Prostate gland (tissue), 2 donors: ENCODE measurements at regions of chr19 and their contacts with region 1.

Region 1: GRCh38 chr19:29610563-29611271 is 4.6 kb downstream of the POP4 start:
- DNase-seq: peak; percentile 79
- H3K4me3 ChIP-seq: no peak overlapping the region
- H3K27ac ChIP-seq: no peak overlapping the region
- H3K4me1 ChIP-seq: no peaks in the 10 kb centered on the region
- H3K27me3 ChIP-seq: no peaks in the 10 kb centered on the region
- CTCF ChIP-seq: peak; percentile 61 to 89 (median 84)
- POLR2A ChIP-seq: no peak

Region 2: DNA sequence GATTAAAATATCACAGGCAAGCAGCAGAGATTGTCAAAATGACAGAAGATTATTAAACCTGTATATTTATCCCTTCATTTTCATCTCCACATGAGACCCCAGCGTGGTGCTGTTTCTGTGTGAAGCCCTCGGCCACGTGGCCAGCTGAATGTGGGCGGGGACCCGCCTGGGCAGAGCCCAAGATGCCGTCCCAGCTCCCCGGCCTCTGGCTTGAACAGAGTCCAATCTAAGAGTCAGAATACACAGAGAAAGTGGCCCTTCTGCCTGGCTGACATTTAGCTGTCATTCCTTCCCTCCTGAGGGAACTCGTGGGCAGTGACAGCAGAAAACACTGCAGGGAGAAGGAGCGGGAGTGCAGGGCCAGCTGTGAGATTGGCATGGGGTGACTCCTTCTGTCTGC is 362.8 kb before region 1 on chr19:
- intact Hi-C with region 1: no loop called
- DNase-seq: no peak
- H3K4me3 ChIP-seq: no peak overlapping the region
- H3K27ac ChIP-seq: no peak overlapping the region
- H3K4me1 ChIP-seq: no peaks in the 10 kb centered on the region
- H3K27me3 ChIP-seq: no peaks in the 10 kb centered on the region
- CTCF ChIP-seq: no peak
- POLR2A ChIP-seq: no peak

Region 3: DNA sequence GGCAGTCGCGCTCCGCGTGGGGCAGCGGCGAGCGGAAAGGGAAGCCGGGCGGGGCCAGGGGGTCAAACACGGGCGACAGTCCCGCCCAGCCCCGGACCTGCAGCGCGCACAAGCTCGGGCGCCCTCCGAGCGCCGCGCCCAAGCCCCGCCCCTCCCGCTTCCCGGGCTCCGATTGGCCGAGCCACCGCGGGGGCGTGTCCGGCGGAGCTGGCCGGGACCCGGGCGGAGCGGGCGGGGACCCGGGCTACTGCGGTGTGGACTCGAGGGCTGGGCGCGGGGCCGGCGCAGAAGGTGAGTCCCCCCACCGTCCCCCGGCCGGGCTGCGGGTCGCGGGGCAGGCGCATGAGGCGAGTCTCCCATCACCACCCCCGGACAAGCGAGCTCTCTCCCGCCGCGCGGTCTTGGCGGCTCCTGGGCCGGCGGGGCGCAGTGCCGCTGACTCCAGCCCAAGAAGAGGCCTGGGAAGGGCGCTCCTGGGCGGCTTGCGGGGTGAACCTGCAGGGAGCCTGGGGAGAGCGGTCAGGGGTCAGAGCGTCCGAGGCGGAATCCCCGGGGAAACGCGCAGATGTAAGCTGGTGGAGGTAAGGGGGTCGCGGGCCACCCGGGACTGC is 54.6 kb after region 1 on chr19 and contains the start of gene PLEKHF1:
- intact Hi-C with region 1: loop called (anchors 5 kb)
- DNase-seq: peak; percentile 89
- H3K4me3 ChIP-seq: peak within 1 kb of the TSS; percentile 76 to 88
- H3K27ac ChIP-seq: peak within 1 kb of the TSS; percentile 89 to 91
- H3K4me1 ChIP-seq: peaks cover 24% of the 10 kb centered on the region
- H3K27me3 ChIP-seq: no peaks in the 10 kb centered on the region
- CTCF ChIP-seq: peak in 1 of 4 experiments; percentile 9
- POLR2A ChIP-seq: peak; percentile 89
- total RNA-seq, gene PLEKHF1: 64.3 to 64.4 TPM

Region 4: GRCh38 chr19:29694669-29695627 is 84.2 kb after region 1 on chr19:
- intact Hi-C with region 1: loop called (anchors 2 kb)
- DNase-seq: peak; percentile 70
- H3K4me3 ChIP-seq: no peak overlapping the region
- H3K27ac ChIP-seq: peak overlapping the region in 1 of 2 donors; percentile 13
- H3K4me1 ChIP-seq: no peaks in the 10 kb centered on the region
- H3K27me3 ChIP-seq: no peaks in the 10 kb centered on the region
- CTCF ChIP-seq: peak; percentile 57 to 84 (median 76)
- POLR2A ChIP-seq: no peak

Region 5: DNA sequence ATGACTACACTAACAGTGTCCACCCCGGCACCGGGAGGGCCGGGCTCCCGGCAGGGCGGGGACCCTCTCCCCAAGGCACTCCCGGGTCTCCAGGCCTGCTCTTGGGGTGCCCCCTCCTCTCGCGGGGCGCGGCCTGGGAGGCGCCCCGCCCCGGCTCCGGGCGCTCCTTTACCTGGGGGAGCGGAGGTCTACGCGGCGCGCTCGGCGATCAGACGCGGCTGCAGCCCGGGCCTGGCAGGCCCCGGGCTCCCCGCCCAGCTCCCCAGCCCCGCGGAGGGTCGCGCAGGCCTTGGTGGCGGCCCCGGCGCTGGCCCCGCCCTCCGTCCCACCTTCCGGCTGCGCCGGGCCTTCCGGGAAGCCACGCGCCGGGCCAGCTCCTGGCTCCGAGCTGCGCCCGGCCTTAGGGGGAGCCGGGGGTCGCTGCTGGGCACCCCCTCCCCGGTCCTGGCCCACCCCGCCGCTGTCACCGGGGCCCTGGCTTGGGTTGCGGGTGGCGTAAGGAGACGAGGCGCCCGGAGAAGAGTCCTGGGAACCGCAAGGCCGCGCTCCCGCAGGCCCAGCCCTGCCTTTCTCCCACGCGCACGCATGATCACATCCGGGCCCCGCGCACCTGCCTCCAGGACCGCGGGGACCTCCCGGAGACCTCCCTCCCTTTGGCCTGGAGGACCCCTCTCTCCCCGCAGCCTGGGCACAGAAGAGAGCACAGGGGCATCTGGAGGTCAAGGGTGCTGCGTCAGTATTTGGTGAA is 104.4 kb after region 1 on chr19 and contains the start of gene C19orf12:
- intact Hi-C with region 1: loop called (anchors 1 kb)
- DNase-seq: peak; percentile 22
- H3K4me3 ChIP-seq: peak within 1 kb of the TSS; percentile 93 to 98
- H3K27ac ChIP-seq: peak within 1 kb of the TSS; percentile 87 to 89
- H3K4me1 ChIP-seq: peaks cover 5% of the 10 kb centered on the region
- H3K27me3 ChIP-seq: no peaks in the 10 kb centered on the region
- CTCF ChIP-seq: no peak
- POLR2A ChIP-seq: peak; percentile 68
- total RNA-seq, gene C19orf12: 27.9 to 42.4 TPM

Region 6: GRCh38 chr19:29844891-29845572 is 234.3 kb after region 1 on chr19:
- intact Hi-C with region 1: loop called (anchors 10 kb)
- DNase-seq: peak; percentile 88
- H3K4me3 ChIP-seq: peak overlapping the region; percentile 75 to 82
- H3K27ac ChIP-seq: peak overlapping the region; percentile 87 to 89
- H3K4me1 ChIP-seq: peaks cover 6% of the 10 kb centered on the region
- H3K27me3 ChIP-seq: no peaks in the 10 kb centered on the region
- CTCF ChIP-seq: no peak
- POLR2A ChIP-seq: peak; percentile 66